ENCODE measurements at regions of chr16 and their contacts with region 1.

Region 1: DNA sequence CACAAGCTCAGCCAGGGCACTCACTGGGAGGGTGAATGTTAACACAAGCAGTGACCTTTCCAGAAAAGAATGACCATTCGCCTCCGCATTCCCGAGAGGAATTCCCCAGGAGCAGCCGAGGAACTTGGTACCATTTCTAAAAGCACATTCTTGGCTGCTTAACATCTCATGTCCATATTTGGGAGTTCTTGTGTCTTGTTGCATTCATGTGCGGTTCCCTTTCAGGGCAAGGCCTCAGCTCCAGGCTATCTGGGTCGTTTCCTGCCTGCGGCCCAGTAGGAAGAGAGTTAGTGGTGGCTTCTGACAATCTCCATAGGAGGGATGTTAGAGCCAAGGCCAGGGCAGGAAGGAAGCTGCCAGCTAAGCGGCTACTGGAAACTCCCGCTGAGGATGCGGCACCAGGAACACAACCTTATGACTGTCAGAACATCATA is 27.8 kb upstream of the MEAK7 start:
- DNase-seq: peak; percentile 73 to 87
- H3K4me3 ChIP-seq: no peak overlapping the region
- H3K4me3 Mint-ChIP-seq: peak overlapping the region; percentile 64
- H3K27ac Mint-ChIP-seq: peak overlapping the region; percentile 96
- H3K4me1 ChIP-seq: peaks cover 61% of the 10 kb centered on the region
- H3K4me1 Mint-ChIP-seq: peaks cover 40% of the 10 kb centered on the region
- H3K27me3 ChIP-seq: no peaks in the 10 kb centered on the region
- H3K27me3 Mint-ChIP-seq: no peaks in the 10 kb centered on the region
- CTCF ChIP-seq: no peak

Region 2: GRCh38 chr16:84511180-84511824 is 21.0 kb before region 1 on chr16:
- CTCF ChIA-PET with region 1: interaction called, 5 read pairs
- POLR2A ChIA-PET with region 1: interaction called, 4 read pairs
- intact Hi-C with region 1: loop called (anchors 1 kb)
- DNase-seq: peak; percentile 78 to 88
- H3K4me3 ChIP-seq: no peak overlapping the region
- H3K4me3 Mint-ChIP-seq: peak overlapping the region; percentile 21
- H3K27ac Mint-ChIP-seq: peak overlapping the region; percentile 56
- H3K4me1 ChIP-seq: peaks cover 36% of the 10 kb centered on the region
- H3K4me1 Mint-ChIP-seq: peaks cover 43% of the 10 kb centered on the region
- H3K27me3 ChIP-seq: no peaks in the 10 kb centered on the region
- H3K27me3 Mint-ChIP-seq: no peaks in the 10 kb centered on the region
- CTCF ChIP-seq: peak; percentile 91 to 95

Region 3: GRCh38 chr16:84555418-84556195 is 23.3 kb after region 1 on chr16:
- CTCF ChIA-PET with region 1: no interaction called
- POLR2A ChIA-PET with region 1: interaction called, 4 read pairs
- intact Hi-C with region 1: loop called (anchors 1 kb)
- DNase-seq: peak; percentile 64 to 78
- H3K4me3 ChIP-seq: no peak overlapping the region
- H3K4me3 Mint-ChIP-seq: peak overlapping the region; percentile 36
- H3K27ac Mint-ChIP-seq: peak overlapping the region; percentile 77
- H3K4me1 ChIP-seq: peaks cover 57% of the 10 kb centered on the region
- H3K4me1 Mint-ChIP-seq: peaks cover 56% of the 10 kb centered on the region
- H3K27me3 ChIP-seq: no peaks in the 10 kb centered on the region
- H3K27me3 Mint-ChIP-seq: no peaks in the 10 kb centered on the region
- CTCF ChIP-seq: no peak

Region 4: DNA sequence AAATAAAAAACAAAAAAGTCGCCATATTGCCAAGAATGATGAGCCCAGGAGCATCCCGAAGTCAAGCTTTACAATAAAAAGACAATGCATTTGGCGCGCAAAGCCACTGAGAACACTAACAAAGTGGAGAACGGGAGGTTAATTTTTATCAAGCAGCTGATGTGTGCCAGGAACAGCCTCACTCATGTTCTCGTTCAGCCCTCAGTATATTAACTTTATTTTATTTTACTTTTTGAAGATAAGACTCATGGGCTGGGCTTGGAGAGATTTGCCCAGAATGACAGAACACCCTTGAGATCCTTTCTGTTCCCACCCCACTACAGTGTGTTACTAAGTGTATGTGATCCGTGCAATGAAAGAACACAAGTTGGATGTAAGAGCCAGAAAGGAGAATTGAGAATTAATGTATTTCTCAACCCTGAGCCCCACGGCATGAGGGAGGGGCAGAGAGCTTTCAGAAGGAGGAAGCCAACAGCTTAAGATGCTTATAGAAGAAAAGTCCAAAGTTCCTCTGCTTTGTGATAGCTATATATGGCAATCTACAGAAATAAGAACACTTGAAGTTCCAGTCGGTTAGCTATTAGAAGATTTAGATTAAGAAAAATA is 37.2 kb after region 1 on chr16:
- CTCF ChIA-PET with region 1: interaction called, 4 read pairs
- POLR2A ChIA-PET with region 1: interaction called, 6 read pairs
- intact Hi-C with region 1: loop called (anchors 1 kb)
- DNase-seq: peak; percentile 74 to 78
- H3K4me3 ChIP-seq: no peak overlapping the region
- H3K4me3 Mint-ChIP-seq: peak overlapping the region; percentile 62
- H3K27ac Mint-ChIP-seq: peak overlapping the region; percentile 95
- H3K4me1 ChIP-seq: peaks cover 50% of the 10 kb centered on the region
- H3K4me1 Mint-ChIP-seq: peaks cover 58% of the 10 kb centered on the region
- H3K27me3 ChIP-seq: no peaks in the 10 kb centered on the region
- H3K27me3 Mint-ChIP-seq: no peaks in the 10 kb centered on the region
- CTCF ChIP-seq: no peak

Measured in Caco-2 (cell line).